ENCODE measurements at regions of chr15 and their contacts with region 1.

Region 1: DNA sequence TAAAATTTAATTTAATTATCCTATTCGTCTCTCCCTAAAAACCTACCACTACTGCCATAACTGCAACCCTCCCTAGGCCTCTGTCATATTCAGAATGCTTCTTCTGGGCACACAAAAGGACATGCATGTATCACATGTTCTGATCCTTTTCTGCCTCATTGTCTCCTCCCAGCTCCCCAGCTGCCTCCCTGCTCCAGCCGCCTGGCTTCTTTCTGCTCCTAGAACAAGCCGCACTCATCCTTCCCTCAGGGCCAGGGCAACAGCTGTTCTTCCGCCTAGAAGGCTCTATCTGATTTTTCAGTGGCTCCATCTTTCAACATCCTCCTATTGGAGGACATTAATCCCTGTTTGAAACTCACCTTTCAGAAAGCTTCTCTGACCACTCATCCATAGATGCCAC is 38.6 kb downstream of the TMED3 start:
- DNase-seq: no peak
- H3K4me3 ChIP-seq: no peak overlapping the region
- H3K27ac ChIP-seq: no peak overlapping the region
- H3K4me1 ChIP-seq: no peaks in the 10 kb centered on the region
- H3K27me3 ChIP-seq: no peaks in the 10 kb centered on the region
- CTCF ChIP-seq: no peak
- EP300 ChIP-seq: no peak
- POLR2A ChIP-seq: no peak
- RAD21 ChIP-seq: no peak

Region 2: GRCh38 chr15:79364571-79365240 is 15.2 kb after region 1 on chr15:
- CTCF ChIA-PET with region 1: interaction called, 17 read pairs
- POLR2A ChIA-PET with region 1: no interaction called
- DNase-seq: no peak
- H3K4me3 ChIP-seq: no peak overlapping the region
- H3K27ac ChIP-seq: no peak overlapping the region
- H3K4me1 ChIP-seq: peaks cover 0 to 7% (median 3%) of the 10 kb centered on the region in 4 experiments; a peak in 5 of 7 replicates
- H3K27me3 ChIP-seq: no peaks in the 10 kb centered on the region; a peak in 1 of 7 replicates
- CTCF ChIP-seq: peak; percentile 36 to 58 (median 52); a peak in 3 of 4 replicates
- EP300 ChIP-seq: no peak
- POLR2A ChIP-seq: no peak
- RAD21 ChIP-seq: peak; percentile 19 to 32; a peak in 2 of 4 replicates